ENCODE measurements at regions of chr2 and their contacts with region 1.

Region 1: GRCh38 chr2:168594778-168595177 is 138.7 kb downstream of the CERS6 start:
- DNase-seq: no peak
- H3K4me3 ChIP-seq: no peak overlapping the region
- H3K27ac ChIP-seq: no peak overlapping the region
- H3K4me1 ChIP-seq: peaks cover 2% of the 10 kb centered on the region
- H3K27me3 ChIP-seq: no peaks in the 10 kb centered on the region
- CTCF ChIP-seq: no peak
- EP300 ChIP-seq: no peak
- POLR2A ChIP-seq: no peak

Region 2: DNA sequence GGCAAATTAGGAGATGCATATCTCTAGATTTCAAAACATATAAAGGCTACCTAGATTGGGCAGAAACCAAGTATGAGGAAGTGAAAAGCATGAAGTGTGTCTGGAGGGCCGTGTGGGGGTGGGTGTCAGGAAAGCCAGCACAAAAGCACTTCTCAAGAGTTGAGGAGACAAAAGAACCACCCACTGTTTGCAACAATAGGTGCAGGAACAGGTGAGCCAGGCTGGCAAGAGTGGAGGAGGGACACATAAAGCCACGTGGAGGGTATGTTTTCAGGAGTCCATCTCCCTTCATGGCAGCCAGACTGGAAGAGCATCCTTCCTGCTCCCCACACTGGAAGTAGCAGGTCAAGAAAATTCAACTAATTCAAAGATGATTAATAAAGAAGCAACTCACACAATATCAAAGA is 42.3 kb before region 1 on chr2:
- intact Hi-C with region 1: no loop called
- DNase-seq: no peak
- H3K4me3 ChIP-seq: no peak overlapping the region
- H3K27ac ChIP-seq: no peak overlapping the region
- H3K4me1 ChIP-seq: no peaks in the 10 kb centered on the region
- H3K27me3 ChIP-seq: no peaks in the 10 kb centered on the region
- CTCF ChIP-seq: no peak
- EP300 ChIP-seq: no peak
- POLR2A ChIP-seq: no peak

Region 3: GRCh38 chr2:169080250-169081069 is 485.7 kb after region 1 on chr2:
- intact Hi-C with region 1: no loop called
- DNase-seq: no peak
- H3K4me3 ChIP-seq: no peak overlapping the region
- H3K27ac ChIP-seq: no peak overlapping the region
- H3K4me1 ChIP-seq: no peaks in the 10 kb centered on the region
- H3K27me3 ChIP-seq: no peaks in the 10 kb centered on the region
- CTCF ChIP-seq: no peak
- EP300 ChIP-seq: no peak
- POLR2A ChIP-seq: no peak

Region 4: DNA sequence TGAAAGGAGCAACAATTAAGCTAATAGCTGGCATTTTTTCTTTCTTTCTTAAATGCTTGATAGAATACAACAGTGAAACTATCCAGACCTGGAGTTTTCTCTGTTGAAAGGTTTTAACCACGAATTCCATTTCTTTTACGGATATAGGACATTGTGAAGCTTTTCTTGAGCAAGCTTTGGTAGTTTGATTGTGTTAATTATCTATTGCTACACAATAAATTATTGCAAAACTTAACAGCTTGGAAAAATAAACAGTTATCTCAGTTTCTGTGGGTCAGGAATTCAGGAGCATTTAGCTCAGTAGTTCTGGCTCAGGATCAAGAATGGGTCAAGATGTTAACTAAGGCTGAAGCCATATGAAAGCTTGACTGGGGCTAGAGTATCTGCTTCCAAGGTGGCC is 1111.1 kb after region 1 on chr2:
- intact Hi-C with region 1: loop called in 1 of 4 experiments (anchors 10 kb)
- DNase-seq: no peak
- H3K4me3 ChIP-seq: no peak overlapping the region
- H3K27ac ChIP-seq: no peak overlapping the region
- H3K4me1 ChIP-seq: no peaks in the 10 kb centered on the region
- H3K27me3 ChIP-seq: no peaks in the 10 kb centered on the region
- CTCF ChIP-seq: no peak
- EP300 ChIP-seq: no peak
- POLR2A ChIP-seq: no peak

Measured in ovary (tissue), 10 donors.